ENCODE measurements at regions of chr7 and their contacts with region 1.

Region 1: GRCh38 chr7:25663877-25664276 is 435.6 kb upstream of the NPVF start:
- DNase-seq: no peak
- H3K4me3 ChIP-seq: no peak overlapping the region
- H3K27ac ChIP-seq: peak overlapping the region; percentile 69 to 83 (median 76)
- H3K4me1 ChIP-seq: peaks cover 0 to 80% (median 63%) of the 10 kb centered on the region in 4 donors
- H3K27me3 ChIP-seq: no peaks in the 10 kb centered on the region
- CTCF ChIP-seq: no peak
- EP300 ChIP-seq: no peak
- POLR2A ChIP-seq: no peak

Region 2: DNA sequence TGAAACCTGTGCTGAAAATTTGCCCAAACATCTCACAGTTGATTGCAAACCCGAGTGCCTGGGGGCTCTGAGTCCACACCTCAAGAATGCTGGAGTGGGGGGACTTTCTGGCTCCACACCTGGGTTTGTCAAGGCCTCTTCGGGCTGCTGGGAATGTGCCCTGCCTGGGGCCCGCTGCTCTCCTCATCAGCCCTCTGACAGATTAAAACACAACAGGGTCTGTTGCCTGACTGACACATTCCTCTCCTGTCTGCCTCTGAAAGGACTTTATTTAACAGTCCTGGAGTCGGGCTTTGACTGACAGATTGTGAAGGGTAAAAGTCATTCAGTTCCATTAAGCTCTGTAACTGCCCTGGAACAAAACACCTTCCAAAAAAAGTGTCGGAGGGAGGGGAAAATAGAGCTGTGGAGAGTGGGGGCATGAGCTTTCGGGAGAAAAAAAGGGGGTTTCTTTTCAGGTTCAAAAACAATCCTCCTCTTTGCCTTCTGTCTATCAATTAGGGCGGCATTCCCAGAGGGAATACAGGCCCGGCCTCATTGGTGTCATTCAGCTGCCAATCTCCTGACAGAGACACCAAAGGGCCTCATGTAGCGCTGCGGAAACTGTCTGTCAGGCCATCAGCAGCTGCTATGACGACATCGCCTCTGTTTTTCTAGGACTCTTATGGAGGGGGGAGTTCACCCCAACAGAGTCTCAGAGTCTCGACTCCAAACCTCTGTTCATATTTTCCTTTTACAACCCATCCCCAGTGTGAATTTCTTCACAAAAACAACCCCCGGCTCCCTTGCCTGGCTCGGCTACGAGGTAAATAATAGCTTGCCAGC is 89.3 kb after region 1 on chr7:
- intact Hi-C with region 1: loop called (anchors 2 kb)
- DNase-seq: no peak
- H3K4me3 ChIP-seq: no peak overlapping the region
- H3K27ac ChIP-seq: peak overlapping the region; percentile 82 to 89 (median 88)
- H3K4me1 ChIP-seq: peaks cover 0 to 75% (median 68%) of the 10 kb centered on the region in 4 donors
- H3K27me3 ChIP-seq: no peaks in the 10 kb centered on the region
- CTCF ChIP-seq: no peak
- EP300 ChIP-seq: no peak
- POLR2A ChIP-seq: no peak

Region 3: GRCh38 chr7:25843467-25843866 is 179.6 kb after region 1 on chr7:
- intact Hi-C with region 1: loop called (anchors 2 kb)
- DNase-seq: no peak
- H3K4me3 ChIP-seq: no peak overlapping the region
- H3K27ac ChIP-seq: peak overlapping the region in 2 of 4 donors; percentile 76 to 95
- H3K4me1 ChIP-seq: peaks cover 0 to 98% (median 68%) of the 10 kb centered on the region in 4 donors
- H3K27me3 ChIP-seq: no peaks in the 10 kb centered on the region
- CTCF ChIP-seq: no peak
- EP300 ChIP-seq: no peak
- POLR2A ChIP-seq: no peak